H1 (cell line): ENCODE measurements at regions of chr3 and their contacts with region 1.

Region 1: DNA sequence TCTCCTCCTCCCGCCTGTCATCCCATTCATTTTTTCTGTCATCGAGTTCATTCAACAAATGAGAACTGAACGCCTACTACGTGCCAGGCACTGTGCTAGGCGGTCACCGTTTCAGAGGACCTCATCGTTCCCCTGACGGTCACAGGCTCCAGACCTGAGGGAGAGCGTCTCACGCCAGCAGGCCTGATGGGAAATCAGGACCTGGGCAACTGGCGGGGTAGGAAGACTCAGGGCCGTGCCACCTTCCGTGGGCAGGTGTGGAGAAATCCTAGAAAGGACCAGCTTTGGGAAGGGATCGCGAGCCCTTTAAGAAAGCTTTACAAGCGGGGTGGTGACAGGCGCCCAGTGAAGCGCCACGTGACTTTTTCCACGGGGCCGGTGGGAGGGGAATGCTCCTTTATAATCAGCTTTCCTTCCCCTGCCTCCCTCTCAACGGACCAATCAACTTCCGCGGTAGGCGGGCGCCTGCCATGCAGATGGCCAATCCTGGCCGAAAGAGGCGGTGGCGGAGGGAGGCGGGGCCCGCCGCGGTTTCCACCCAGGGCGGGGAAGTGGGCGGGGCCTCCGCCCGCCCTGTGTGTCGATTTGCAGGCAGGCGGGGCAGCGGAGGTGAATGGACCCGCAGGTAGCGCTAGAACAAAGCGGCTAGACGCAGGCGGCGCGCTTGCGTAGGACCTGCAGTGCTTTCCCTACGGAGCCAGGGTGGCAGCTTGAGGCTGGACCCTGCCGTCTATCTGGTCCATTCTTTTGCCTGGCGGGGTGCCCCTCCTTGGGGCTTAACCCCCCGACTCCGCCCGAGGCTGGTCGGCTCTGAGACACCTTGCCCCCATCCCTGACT is 816 bp upstream of the DUSP7 start:
- DNase-seq: peak; percentile 97
- H3K4me3 ChIP-seq: peak overlapping the region; percentile 46 to 89 (median 56)
- H3K27ac ChIP-seq: peak overlapping the region; percentile 21; the same call in 1 of the 2 replicates
- H3K4me1 ChIP-seq: peaks cover 0 to 29% (median 17%) of the 10 kb centered on the region in 4 experiments; a peak in 6 of 7 replicates
- H3K27me3 ChIP-seq: peaks cover 0 to 21% (median 11%) of the 10 kb centered on the region in 4 experiments; a peak in 6 of 7 replicates
- CTCF ChIP-seq: no peak
- EP300 ChIP-seq: no peak
- POLR2A ChIP-seq: no peak
- RAD21 ChIP-seq: no peak; a peak in 1 of 4 replicates

Region 2: GRCh38 chr3:51916418-51916817 is 140.8 kb before region 1 on chr3:
- CTCF ChIA-PET with region 1: no interaction called
- POLR2A ChIA-PET with region 1: no interaction called
- DNase-seq: no peak
- H3K4me3 ChIP-seq: no peak overlapping the region
- H3K27ac ChIP-seq: no peak overlapping the region
- H3K4me1 ChIP-seq: peaks cover 0 to 3% (median under 1%) of the 10 kb centered on the region in 4 experiments; a peak in 2 of 7 replicates
- H3K27me3 ChIP-seq: no peaks in the 10 kb centered on the region
- CTCF ChIP-seq: no peak
- EP300 ChIP-seq: no peak
- POLR2A ChIP-seq: no peak
- RAD21 ChIP-seq: no peak

Region 3: GRCh38 chr3:51982782-51983577 is 74.2 kb before region 1 on chr3 and contains the start of gene ACY1:
- CTCF ChIA-PET with region 1: interaction called, 10 read pairs
- POLR2A ChIA-PET with region 1: interaction called, 5 read pairs
- DNase-seq: peak in 1 of 2 experiments; percentile 89
- H3K4me3 ChIP-seq: peak within 1 kb of the TSS; percentile 53 to 63 (median 56)
- H3K27ac ChIP-seq: peak within 1 kb of the TSS; percentile 45; the same call in 1 of the 2 replicates
- H3K4me1 ChIP-seq: peaks cover 0 to 12% (median 9%) of the 10 kb centered on the region in 4 experiments; a peak in 6 of 7 replicates
- H3K27me3 ChIP-seq: no peaks in the 10 kb centered on the region
- CTCF ChIP-seq: no peak
- EP300 ChIP-seq: no peak
- POLR2A ChIP-seq: peak in 1 of 2 experiments; percentile 86; a peak in 2 of 3 replicates
- RAD21 ChIP-seq: no peak
- total RNA-seq, gene ACY1: 45.5 and 48.3 TPM in 2 replicates

Region 4: GRCh38 chr3:52028572-52028971 is 28.6 kb before region 1 on chr3:
- CTCF ChIA-PET with region 1: interaction called, 984 read pairs
- POLR2A ChIA-PET with region 1: interaction called, 6 read pairs
- DNase-seq: no peak
- H3K4me3 ChIP-seq: no peak overlapping the region
- H3K27ac ChIP-seq: no peak overlapping the region
- H3K4me1 ChIP-seq: peaks cover 0 to 2% (median 0%) of the 10 kb centered on the region in 4 experiments; a peak in 2 of 7 replicates
- H3K27me3 ChIP-seq: no peaks in the 10 kb centered on the region
- CTCF ChIP-seq: no peak
- EP300 ChIP-seq: no peak
- POLR2A ChIP-seq: no peak
- RAD21 ChIP-seq: no peak

Region 5: GRCh38 chr3:52070724-52071621 is 13.8 kb after region 1 on chr3:
- CTCF ChIA-PET with region 1: interaction called, 15 read pairs
- POLR2A ChIA-PET with region 1: interaction called, 7 read pairs
- DNase-seq: no peak
- H3K4me3 ChIP-seq: no peak overlapping the region
- H3K27ac ChIP-seq: no peak overlapping the region
- H3K4me1 ChIP-seq: no peaks in the 10 kb centered on the region; a peak in 2 of 7 replicates
- H3K27me3 ChIP-seq: no peaks in the 10 kb centered on the region; a peak in 1 of 7 replicates
- CTCF ChIP-seq: no peak
- EP300 ChIP-seq: no peak
- POLR2A ChIP-seq: no peak
- RAD21 ChIP-seq: no peak

Region 6: GRCh38 chr3:52108302-52109232 is 51.4 kb after region 1 on chr3:
- CTCF ChIA-PET with region 1: interaction called, 17 read pairs
- POLR2A ChIA-PET with region 1: no interaction called
- DNase-seq: no peak
- H3K4me3 ChIP-seq: no peak overlapping the region
- H3K27ac ChIP-seq: no peak overlapping the region
- H3K4me1 ChIP-seq: no peaks in the 10 kb centered on the region
- H3K27me3 ChIP-seq: no peaks in the 10 kb centered on the region
- CTCF ChIP-seq: peak in 2 of 3 experiments; percentile 12 to 20; a peak in 1 of 4 replicates
- EP300 ChIP-seq: no peak
- POLR2A ChIP-seq: no peak
- RAD21 ChIP-seq: peak in 1 of 2 experiments; percentile 42; a peak in 3 of 4 replicates

Region 7: DNA sequence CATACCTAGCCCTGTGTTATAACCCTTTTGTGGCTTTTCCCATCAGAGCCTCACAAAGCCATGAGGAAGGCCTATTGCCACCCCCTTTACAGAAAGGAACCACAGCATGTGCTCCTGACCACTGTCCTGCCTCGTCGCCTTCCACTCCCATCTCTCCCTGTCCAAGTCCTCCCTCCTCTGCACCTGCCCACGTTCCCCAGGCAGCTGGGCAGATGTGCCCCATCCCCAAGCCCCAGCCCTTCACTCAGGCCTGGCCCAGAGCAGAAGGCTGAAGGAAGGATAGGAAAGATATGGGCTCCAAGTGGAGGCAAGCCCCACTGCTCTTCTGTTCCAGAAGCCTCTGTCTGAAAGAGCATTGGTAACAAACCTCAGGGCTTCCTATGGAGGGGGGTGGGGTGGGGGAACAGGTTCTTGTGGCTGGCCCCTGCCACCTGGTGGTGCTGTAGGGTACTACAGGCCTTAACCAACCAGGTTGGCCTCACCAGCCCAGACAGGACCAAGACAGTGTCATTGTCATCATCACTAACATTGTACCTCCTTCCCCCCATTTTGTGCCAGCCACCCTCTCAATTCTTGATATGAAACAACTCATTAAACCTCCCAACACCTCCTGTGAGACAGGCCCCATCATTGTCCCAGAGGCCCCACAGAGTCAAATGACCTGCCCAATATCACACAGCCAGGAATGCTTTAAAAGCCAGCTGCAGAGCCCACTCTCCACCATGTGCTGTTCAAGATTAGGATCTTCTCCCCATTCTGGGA is 87.0 kb after region 1 on chr3:
- CTCF ChIA-PET with region 1: interaction called, 148 read pairs
- POLR2A ChIA-PET with region 1: interaction called, 5 read pairs
- DNase-seq: peak; percentile 54 to 92
- H3K4me3 ChIP-seq: no peak overlapping the region
- H3K27ac ChIP-seq: 0 out of 2 replicates have a peak overlapping the region, but pooled peaks have one; percentile 3
- H3K4me1 ChIP-seq: no peaks in the 10 kb centered on the region; a peak in 2 of 7 replicates
- H3K27me3 ChIP-seq: no peaks in the 10 kb centered on the region
- CTCF ChIP-seq: peak in 2 of 3 experiments; percentile 91 to 93; a peak in 3 of 4 replicates
- EP300 ChIP-seq: no peak
- POLR2A ChIP-seq: no peak
- RAD21 ChIP-seq: peak; percentile 82 to 86